HepG2 (cell line): ENCODE measurements at regions of chr2 and their contacts with region 1.

Region 1: GRCh38 chr2:206004004-206004693 is 81.8 kb downstream of the INO80D start:
- DNase-seq: peak; percentile 53
- ATAC-seq: peak; percentile 97
- H3K4me3 ChIP-seq: no peak overlapping the region
- H3K27ac ChIP-seq: no peak overlapping the region
- H3K4me1 ChIP-seq: no peaks in the 10 kb centered on the region
- H3K27me3 ChIP-seq: no peaks in the 10 kb centered on the region
- CTCF ChIP-seq: peak; percentile 82
- EP300 ChIP-seq: no peak
- POLR2A ChIP-seq: no peak
- RAD21 ChIP-seq: peak; percentile 78

Region 2: DNA sequence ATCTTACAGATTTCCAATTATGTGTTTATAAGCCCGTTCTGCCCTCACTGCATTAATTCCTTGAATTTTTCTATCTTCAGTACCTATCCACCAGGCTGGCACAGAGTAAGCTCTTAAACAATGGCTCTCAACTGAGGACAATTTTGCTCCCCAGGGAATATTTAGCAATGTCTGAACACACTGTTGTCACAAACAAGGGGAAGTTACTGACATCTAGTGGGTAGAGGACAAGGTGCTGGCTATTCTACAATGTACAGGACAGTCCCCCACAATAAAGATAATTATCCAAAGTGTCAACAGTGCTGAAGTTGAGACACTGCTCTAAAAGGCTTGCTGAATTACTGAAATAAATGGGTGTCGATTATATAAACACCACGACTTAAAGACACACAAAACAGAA is 150.0 kb after region 1 on chr2:
- CTCF ChIA-PET with region 1: interaction called, 5 read pairs
- POLR2A ChIA-PET with region 1: no interaction called
- in situ Hi-C with region 1: no loop called
- intact Hi-C with region 1: loop called (anchors 1 kb)
- DNase-seq: peak; percentile 58
- ATAC-seq: peak; percentile 83
- H3K4me3 ChIP-seq: no peak overlapping the region
- H3K27ac ChIP-seq: no peak overlapping the region
- H3K4me1 ChIP-seq: peaks cover 29% of the 10 kb centered on the region
- H3K27me3 ChIP-seq: no peaks in the 10 kb centered on the region; a peak in 1 of 5 replicates
- CTCF ChIP-seq: peak; percentile 77
- EP300 ChIP-seq: no peak
- POLR2A ChIP-seq: no peak
- RAD21 ChIP-seq: no peak

Region 3: GRCh38 chr2:206260188-206261012 is 256.3 kb after region 1 on chr2:
- CTCF ChIA-PET with region 1: no interaction called
- POLR2A ChIA-PET with region 1: no interaction called
- in situ Hi-C with region 1: no loop called
- intact Hi-C with region 1: loop called (anchors 1 kb)
- DNase-seq: peak; percentile 23
- ATAC-seq: peak; percentile 89
- H3K4me3 ChIP-seq: no peak overlapping the region
- H3K27ac ChIP-seq: no peak overlapping the region
- H3K4me1 ChIP-seq: no peaks in the 10 kb centered on the region
- H3K27me3 ChIP-seq: peaks cover 7 to 82% of the 10 kb centered on the region in 2 experiments; a peak in 4 of 5 replicates
- CTCF ChIP-seq: peak; percentile 41; the same call in 1 of the 2 replicates
- EP300 ChIP-seq: no peak
- POLR2A ChIP-seq: no peak
- RAD21 ChIP-seq: no peak